Naive thymus-derived CD8-positive, alpha-beta T cell (primary cell): ENCODE measurements at regions of chr3 and their contacts with region 1.

Region 1: GRCh38 chr3:71583566-71584449 is at the start of gene FOXP1:
- DNase-seq: peak; percentile 33 to 76 (median 67)
- ATAC-seq: peak; percentile 36 to 53
- H3K4me3 Mint-ChIP-seq: peak within 1 kb of the TSS; percentile 92 to 98 (median 96)
- H3K27ac Mint-ChIP-seq: peak within 1 kb of the TSS; percentile 93 to 99 (median 96)
- H3K4me1 Mint-ChIP-seq: peaks cover 11 to 52% (median 42%) of the 10 kb centered on the region in 4 donors
- H3K27me3 Mint-ChIP-seq: no peaks in the 10 kb centered on the region
- polyA plus RNA-seq, gene FOXP1: 280 to 382 (median 361) TPM

Region 2: DNA sequence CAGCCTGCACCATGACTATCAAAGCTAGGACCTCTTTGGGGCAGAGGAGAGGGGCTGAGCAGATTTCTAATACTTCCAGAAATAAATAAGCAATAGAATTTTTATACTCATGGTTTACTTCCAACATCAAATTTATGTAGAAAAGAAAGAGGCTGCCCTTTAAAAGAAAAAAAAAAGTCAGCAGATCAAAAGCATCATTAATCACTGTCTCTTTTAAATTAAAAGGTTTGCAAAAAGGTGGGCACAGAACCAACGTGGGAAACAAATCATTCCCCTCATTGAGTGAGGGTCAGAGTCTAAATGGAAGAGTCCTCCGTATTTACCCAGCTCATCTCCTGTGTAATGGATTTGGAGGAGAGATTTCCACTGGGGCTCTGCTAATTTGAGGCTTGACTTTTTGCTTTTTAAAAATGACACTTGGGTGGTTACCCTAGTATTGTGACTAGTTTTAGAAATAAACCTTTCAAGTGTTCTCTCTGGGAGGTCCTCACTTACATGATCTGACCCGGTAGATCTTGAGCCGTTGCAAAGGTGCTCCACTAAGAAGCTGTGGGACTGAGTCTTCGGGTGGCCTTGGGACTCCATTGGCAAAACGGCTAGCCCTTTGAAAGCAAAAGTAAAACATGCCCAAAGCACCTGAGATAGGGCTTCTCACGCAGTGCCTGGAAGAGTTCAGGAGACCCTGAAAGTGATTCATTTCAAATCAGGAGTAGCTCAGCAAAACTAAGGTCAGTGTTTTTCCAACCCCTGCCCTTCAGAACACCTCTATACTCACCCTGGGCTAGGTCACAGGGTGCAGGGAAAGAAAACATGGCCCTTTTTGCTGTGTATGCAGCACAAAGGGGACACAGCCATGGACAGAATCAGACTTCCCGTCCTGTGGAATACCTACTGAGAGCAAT is 321.2 kb before region 1 on chr3:
- POLR2A ChIA-PET with region 1: interaction called, 12 read pairs
- DNase-seq: no peak
- ATAC-seq: no peak
- H3K4me3 Mint-ChIP-seq: peak overlapping the region in 9 of 10 donors; percentile 10 to 62 (median 38)
- H3K27ac Mint-ChIP-seq: peak overlapping the region; percentile 4 to 89 (median 74)
- H3K4me1 Mint-ChIP-seq: peaks cover 54 to 83% (median 76%) of the 10 kb centered on the region in 4 donors
- H3K27me3 Mint-ChIP-seq: no peaks in the 10 kb centered on the region

Region 3: DNA sequence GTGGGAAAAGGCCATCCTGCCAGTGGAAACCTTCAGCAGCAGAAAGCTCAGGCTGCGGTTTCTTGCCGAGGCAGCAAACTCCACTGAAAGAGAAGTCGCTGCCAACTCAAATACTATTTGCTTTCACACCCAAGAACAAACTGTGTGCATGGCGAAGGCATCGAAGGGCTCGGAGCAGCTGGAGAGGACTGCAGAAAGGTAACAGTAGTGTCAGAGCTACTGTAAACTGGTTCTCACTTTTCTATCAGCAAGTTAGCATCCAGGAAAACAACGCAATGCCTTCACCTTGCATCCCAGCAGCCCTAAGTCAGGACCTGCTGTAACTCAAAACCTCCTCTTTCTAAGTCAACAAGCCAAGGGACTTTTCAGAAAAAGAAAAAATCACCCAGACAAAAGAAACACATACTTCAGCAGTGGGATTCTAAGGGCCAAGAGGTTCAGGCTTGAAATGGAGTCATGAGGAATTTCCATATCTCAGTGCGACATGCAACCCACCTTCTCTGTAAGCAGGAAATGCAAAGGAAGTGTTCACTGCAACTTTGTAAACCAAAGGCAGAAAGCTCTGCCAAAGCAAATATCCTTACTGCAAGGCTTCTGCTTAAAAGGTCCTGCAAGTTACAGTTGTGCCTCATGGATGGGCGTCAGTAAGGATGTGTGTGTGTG is 193.8 kb before region 1 on chr3:
- POLR2A ChIA-PET with region 1: interaction called, 11 read pairs
- DNase-seq: peak in 9 of 10 donors; percentile 22 to 69 (median 44)
- ATAC-seq: peak; percentile 61
- H3K4me3 Mint-ChIP-seq: peak overlapping the region; percentile 53 to 86 (median 82)
- H3K27ac Mint-ChIP-seq: peak overlapping the region; percentile 83 to 98 (median 96)
- H3K4me1 Mint-ChIP-seq: peaks cover 31 to 84% (median 71%) of the 10 kb centered on the region in 4 donors
- H3K27me3 Mint-ChIP-seq: no peaks in the 10 kb centered on the region